BJ (cell line): ENCODE measurements at regions of chr7 and their contacts with region 1.

Region 1: GRCh38 chr7:41892356-41893100 is 189.6 kb upstream of the INHBA start:
- DNase-seq: no peak
- H3K4me3 ChIP-seq: no peak overlapping the region
- H3K27me3 ChIP-seq: no peaks in the 10 kb centered on the region
- CTCF ChIP-seq: no peak

Region 2: DNA sequence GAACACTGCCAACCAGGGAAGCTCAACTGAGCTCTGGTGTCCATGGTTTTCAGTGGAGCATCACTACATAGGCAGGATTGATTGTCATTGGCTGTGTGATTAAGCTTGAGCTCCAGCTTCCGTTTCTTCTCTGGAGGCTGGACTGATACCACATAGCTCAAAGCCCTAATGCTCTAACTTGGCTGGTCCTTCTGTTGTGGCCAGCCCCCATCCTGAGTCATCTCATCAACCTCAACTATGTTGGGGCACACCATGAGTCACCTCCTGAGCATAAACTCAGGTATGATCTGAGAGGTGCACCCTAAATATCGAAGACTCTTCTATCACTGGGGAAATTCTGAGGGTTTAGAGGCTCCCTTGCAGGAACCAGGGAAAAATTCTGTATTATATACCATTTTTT is 75.1 kb before region 1 on chr7:
- CTCF ChIA-PET with region 1: no interaction called
- POLR2A ChIA-PET with region 1: no interaction called
- DNase-seq: no peak
- H3K4me3 ChIP-seq: no peak overlapping the region
- H3K27me3 ChIP-seq: no peaks in the 10 kb centered on the region
- CTCF ChIP-seq: no peak

Region 3: GRCh38 chr7:41834805-41835694 is 57.5 kb before region 1 on chr7:
- CTCF ChIA-PET with region 1: no interaction called
- POLR2A ChIA-PET with region 1: no interaction called
- DNase-seq: no peak
- H3K4me3 ChIP-seq: no peak overlapping the region
- H3K27me3 ChIP-seq: no peaks in the 10 kb centered on the region
- CTCF ChIP-seq: no peak

Region 4: GRCh38 chr7:41880107-41880506 is 12.4 kb before region 1 on chr7:
- CTCF ChIA-PET with region 1: interaction called, 10 read pairs
- POLR2A ChIA-PET with region 1: no interaction called
- DNase-seq: peak; percentile 82
- H3K4me3 ChIP-seq: no peak overlapping the region
- H3K27me3 ChIP-seq: no peaks in the 10 kb centered on the region
- CTCF ChIP-seq: no peak